PC-3 (cell line): ENCODE measurements at regions of chr11 and their contacts with region 1.

Region 1: DNA sequence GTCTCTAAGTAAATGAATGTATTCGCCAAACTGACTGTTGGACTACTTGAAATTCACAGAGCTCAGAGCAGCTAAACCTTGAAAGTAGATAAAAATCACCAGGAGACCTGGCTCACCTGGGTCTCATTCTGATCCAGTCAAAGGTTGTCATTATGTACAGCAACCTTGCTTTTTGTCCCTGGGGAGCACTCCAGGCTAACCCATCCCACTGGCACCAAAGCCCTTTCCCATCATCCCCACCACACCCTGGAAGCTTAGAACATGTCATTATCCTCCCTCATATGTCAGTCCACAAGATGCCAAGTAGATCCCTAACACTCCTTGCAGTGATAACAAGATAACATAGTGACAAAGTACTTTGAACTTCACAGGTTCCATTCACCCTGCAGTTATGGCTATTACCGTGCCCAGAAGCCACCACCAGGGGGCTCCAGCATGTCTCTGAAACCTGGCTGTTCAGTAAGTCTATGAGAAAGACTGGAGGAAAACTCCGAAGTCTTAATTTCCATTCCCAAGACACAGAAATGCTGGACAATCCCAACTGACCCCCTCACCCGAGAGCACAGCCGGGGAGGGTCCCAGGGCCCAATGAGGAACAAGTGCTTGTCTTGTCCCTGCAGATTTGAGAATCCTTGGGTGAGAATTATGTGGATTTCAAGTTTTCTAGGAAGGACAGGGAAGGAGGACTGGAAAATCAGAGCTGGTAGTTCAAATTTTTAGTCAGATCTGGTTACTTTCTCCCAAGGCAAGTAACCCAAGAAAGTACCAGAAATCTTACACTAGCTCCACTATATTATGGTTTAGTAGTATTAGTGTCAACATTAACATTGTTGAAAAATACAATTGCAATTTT is 43.0 kb upstream of the USP47 start:
- DNase-seq: peak; percentile 84
- ATAC-seq: peak; percentile 97
- H3K4me3 ChIP-seq: no peak overlapping the region
- H3K27ac ChIP-seq: no peak overlapping the region
- H3K4me1 ChIP-seq: 0 out of 2 replicates have a peak, but pooled peaks cover 4% of the 10 kb centered on the region
- H3K27me3 ChIP-seq: no peaks in the 10 kb centered on the region
- CTCF ChIP-seq: peak; percentile 95

Region 2: GRCh38 chr11:11848891-11849746 is 50.3 kb after region 1 on chr11:
- CTCF ChIA-PET with region 1: no interaction called
- POLR2A ChIA-PET with region 1: interaction called, 11 read pairs
- intact Hi-C with region 1: loop called (anchors 1 kb)
- DNase-seq: peak; percentile 75
- ATAC-seq: peak; percentile 89
- H3K4me3 ChIP-seq: no peak overlapping the region
- H3K27ac ChIP-seq: no peak overlapping the region
- H3K4me1 ChIP-seq: peaks cover 28% of the 10 kb centered on the region
- H3K27me3 ChIP-seq: no peaks in the 10 kb centered on the region
- CTCF ChIP-seq: peak; percentile 79

Region 3: DNA sequence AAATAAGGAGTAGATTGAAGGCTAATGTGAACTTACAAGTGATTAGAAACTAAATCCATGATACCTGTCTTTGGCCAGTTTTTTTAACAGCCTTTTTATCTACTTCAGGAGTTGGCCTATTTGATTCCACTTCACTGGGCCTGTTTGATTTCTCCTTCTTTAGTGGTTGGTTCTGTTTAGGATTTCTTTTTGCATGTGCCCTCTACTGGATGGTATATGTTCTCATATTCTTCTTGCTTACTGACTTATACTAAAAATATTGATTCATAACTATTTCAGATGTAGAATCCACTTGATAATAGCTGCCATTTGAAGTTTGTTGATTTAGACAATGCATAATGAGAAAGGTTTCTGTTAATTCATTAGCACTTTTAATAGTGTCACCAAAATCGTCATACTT is 96.9 kb after region 1 on chr11:
- CTCF ChIA-PET with region 1: interaction called, 4 read pairs
- POLR2A ChIA-PET with region 1: no interaction called
- intact Hi-C with region 1: loop called (anchors 2 kb)
- DNase-seq: peak; percentile 23
- ATAC-seq: peak; percentile 39; the same call in 1 of the 2 replicates
- H3K4me3 ChIP-seq: no peak overlapping the region
- H3K27ac ChIP-seq: no peak overlapping the region
- H3K4me1 ChIP-seq: peaks cover 17% of the 10 kb centered on the region
- H3K27me3 ChIP-seq: no peaks in the 10 kb centered on the region
- CTCF ChIP-seq: peak; percentile 57; the same call in 1 of the 2 replicates

Region 4: GRCh38 chr11:11923828-11924227 is 125.0 kb after region 1 on chr11:
- CTCF ChIA-PET with region 1: no interaction called
- POLR2A ChIA-PET with region 1: no interaction called
- intact Hi-C with region 1: loop called (anchors 10 kb)
- DNase-seq: no peak
- ATAC-seq: no peak
- H3K4me3 ChIP-seq: no peak overlapping the region
- H3K27ac ChIP-seq: no peak overlapping the region
- H3K4me1 ChIP-seq: no peaks in the 10 kb centered on the region
- H3K27me3 ChIP-seq: no peaks in the 10 kb centered on the region
- CTCF ChIP-seq: no peak

Region 5: DNA sequence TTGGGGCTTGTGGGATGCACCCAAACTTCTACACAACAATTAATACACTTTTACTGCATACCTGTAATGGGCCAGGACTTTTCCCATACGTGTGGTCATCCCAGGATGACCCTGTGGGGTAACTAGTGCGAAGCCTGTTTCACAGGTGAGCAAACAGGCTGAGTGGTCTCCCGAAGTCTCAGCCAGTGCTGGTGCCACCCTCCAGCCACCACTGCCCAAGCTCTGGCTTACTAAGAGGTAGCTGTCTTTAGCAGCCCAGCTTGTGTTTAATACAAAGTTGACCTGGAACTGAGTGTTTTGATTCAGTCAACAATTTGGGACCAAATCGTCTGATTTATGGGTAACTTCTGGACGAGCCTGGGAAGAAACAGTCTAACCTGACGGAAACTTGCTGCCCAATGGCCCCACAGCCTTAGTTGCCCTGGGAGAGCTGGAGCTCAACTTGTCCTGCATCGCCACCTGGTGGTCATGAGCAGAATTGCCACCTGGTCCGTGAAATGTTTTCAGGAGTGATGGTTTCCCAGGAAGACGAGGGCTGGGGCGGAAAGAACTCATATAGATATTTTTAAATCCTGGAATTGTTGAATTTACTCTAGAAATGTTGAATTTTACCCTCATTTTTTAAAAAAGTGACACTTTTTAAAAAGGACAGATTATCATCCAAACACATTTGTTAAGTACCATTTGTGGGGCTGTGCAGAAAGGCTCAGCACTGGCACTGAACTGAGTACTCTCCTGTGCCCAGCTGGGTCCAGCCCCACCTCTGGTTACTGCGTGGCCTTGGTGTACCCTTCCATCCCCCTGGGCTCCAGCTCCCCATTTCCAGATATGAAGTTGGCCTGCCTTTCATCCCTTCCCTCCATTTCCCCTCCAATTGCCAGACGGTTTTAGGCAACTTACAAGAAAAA is 483.0 kb after region 1 on chr11:
- CTCF ChIA-PET with region 1: no interaction called
- POLR2A ChIA-PET with region 1: no interaction called
- intact Hi-C with region 1: loop called (anchors 5 kb)
- DNase-seq: peak; percentile 87
- ATAC-seq: peak; percentile 49
- H3K4me3 ChIP-seq: no peak overlapping the region
- H3K27ac ChIP-seq: 0 out of 2 replicates have a peak overlapping the region, but pooled peaks have one; percentile 5
- H3K4me1 ChIP-seq: peaks cover 53% of the 10 kb centered on the region
- H3K27me3 ChIP-seq: no peaks in the 10 kb centered on the region
- CTCF ChIP-seq: peak; percentile 97